ENCODE measurements at regions of chr5 and their contacts with region 1.

Region 1: GRCh38 chr5:173581408-173582215 is 34.8 kb downstream of the BOD1 start:
- DNase-seq: peak; percentile 33
- H3K4me3 ChIP-seq: no peak overlapping the region
- H3K27ac ChIP-seq: no peak overlapping the region
- H3K4me1 ChIP-seq: no peaks in the 10 kb centered on the region
- H3K27me3 ChIP-seq: peaks cover 2 to 6% of the 10 kb centered on the region in 2 experiments
- CTCF ChIP-seq: peak; percentile 75 to 87
- POLR2A ChIP-seq: no peak

Region 2: DNA sequence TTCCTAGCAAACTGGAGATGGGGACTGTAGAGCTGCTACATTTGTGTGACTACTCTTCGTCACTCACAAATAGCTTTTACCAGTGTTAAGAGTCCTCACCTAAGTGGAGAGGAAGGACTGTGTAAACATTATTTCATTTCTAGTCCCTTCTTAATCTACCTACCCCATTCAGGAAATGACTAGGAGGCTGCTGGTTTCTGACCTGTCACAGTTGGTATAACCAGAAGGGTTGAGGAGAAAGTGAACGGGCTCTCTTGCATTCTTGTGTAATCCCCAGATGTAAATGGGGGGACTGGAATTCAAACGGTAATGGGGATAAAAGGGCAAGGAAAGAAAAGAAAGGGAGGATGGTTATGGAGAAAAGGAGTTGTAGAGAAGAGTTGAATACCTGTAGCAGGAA is 472.7 kb before region 1 on chr5:
- CTCF ChIA-PET with region 1: no interaction called
- POLR2A ChIA-PET with region 1: no interaction called
- dilution Hi-C with region 1: no loop called
- intact Hi-C with region 1: no loop called
- DNase-seq: no peak
- H3K4me3 ChIP-seq: no peak overlapping the region
- H3K27ac ChIP-seq: no peak overlapping the region
- H3K4me1 ChIP-seq: no peaks in the 10 kb centered on the region
- H3K27me3 ChIP-seq: no peaks in the 10 kb centered on the region
- CTCF ChIP-seq: no peak
- POLR2A ChIP-seq: no peak

Region 3: DNA sequence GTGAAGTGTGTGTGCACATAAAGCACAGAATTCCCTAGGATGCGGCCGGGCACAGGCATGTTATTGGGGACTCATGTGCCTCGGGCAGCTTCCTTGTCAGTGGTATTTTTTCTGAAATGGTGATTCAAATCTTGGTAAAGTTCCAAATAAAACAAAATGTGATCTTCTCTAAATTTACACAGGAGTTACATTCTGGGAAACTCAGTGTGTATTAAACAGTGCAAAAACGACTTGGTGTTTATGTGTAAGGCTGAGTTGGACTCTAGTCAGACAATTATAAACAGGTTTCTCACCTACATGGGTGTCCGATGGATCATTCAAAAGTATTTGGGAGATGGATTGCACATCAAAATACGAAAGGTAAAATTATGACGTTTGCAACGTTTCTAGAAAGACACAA is 14.0 kb before region 1 on chr5:
- CTCF ChIA-PET with region 1: interaction called, 20 read pairs
- POLR2A ChIA-PET with region 1: no interaction called
- dilution Hi-C with region 1: no loop called
- intact Hi-C with region 1: no loop called
- DNase-seq: no peak
- H3K4me3 ChIP-seq: no peak overlapping the region
- H3K27ac ChIP-seq: no peak overlapping the region
- H3K4me1 ChIP-seq: no peaks in the 10 kb centered on the region
- H3K27me3 ChIP-seq: peaks cover 0 to 4% of the 10 kb centered on the region in 2 experiments
- CTCF ChIP-seq: no peak
- POLR2A ChIP-seq: no peak

Region 4: GRCh38 chr5:173602423-173602822 is 20.8 kb after region 1 on chr5:
- CTCF ChIA-PET with region 1: interaction called, 10 read pairs
- POLR2A ChIA-PET with region 1: no interaction called
- dilution Hi-C with region 1: no loop called
- intact Hi-C with region 1: no loop called
- DNase-seq: no peak
- H3K4me3 ChIP-seq: no peak overlapping the region
- H3K27ac ChIP-seq: no peak overlapping the region
- H3K4me1 ChIP-seq: no peaks in the 10 kb centered on the region
- H3K27me3 ChIP-seq: no peaks in the 10 kb centered on the region
- CTCF ChIP-seq: no peak
- POLR2A ChIP-seq: no peak

Region 5: GRCh38 chr5:173771121-173771724 is 189.6 kb after region 1 on chr5:
- CTCF ChIA-PET with region 1: no interaction called
- POLR2A ChIA-PET with region 1: no interaction called
- dilution Hi-C with region 1: no loop called
- intact Hi-C with region 1: no loop called
- DNase-seq: peak; percentile 14
- H3K4me3 ChIP-seq: no peak overlapping the region
- H3K27ac ChIP-seq: no peak overlapping the region
- H3K4me1 ChIP-seq: peaks cover 6% of the 10 kb centered on the region
- H3K27me3 ChIP-seq: no peaks in the 10 kb centered on the region
- CTCF ChIP-seq: no peak
- POLR2A ChIP-seq: no peak

Region 6: GRCh38 chr5:173781814-173782670 is 200.4 kb after region 1 on chr5:
- CTCF ChIA-PET with region 1: no interaction called
- POLR2A ChIA-PET with region 1: no interaction called
- dilution Hi-C with region 1: no loop called
- intact Hi-C with region 1: no loop called
- DNase-seq: peak; percentile 94
- H3K4me3 ChIP-seq: no peak overlapping the region
- H3K27ac ChIP-seq: peak overlapping the region; percentile 99
- H3K4me1 ChIP-seq: peaks cover 34% of the 10 kb centered on the region
- H3K27me3 ChIP-seq: no peaks in the 10 kb centered on the region
- CTCF ChIP-seq: no peak
- POLR2A ChIP-seq: peak; percentile 42

Region 7: DNA sequence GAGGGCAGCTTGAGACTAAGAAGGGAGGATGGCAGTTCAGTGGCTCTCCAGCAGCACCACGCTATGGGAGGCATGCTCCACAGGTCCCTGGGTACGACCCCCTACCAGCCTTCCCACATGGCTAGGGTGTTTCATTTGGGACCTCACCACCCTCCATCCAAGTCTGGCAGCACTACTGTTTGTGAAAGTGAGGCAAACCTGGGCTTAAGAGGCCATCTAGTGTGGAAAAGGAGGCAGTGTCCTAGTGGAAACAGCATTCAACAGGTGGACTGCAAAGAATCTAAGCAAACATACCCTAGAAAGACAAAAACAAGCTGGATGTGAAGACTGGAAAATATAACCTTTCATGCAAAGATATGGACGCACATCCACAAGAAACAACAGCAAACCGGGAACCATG is 402.6 kb after region 1 on chr5:
- CTCF ChIA-PET with region 1: interaction called, 10 read pairs
- POLR2A ChIA-PET with region 1: no interaction called
- dilution Hi-C with region 1: no loop called
- intact Hi-C with region 1: no loop called
- DNase-seq: peak; percentile 11
- H3K4me3 ChIP-seq: no peak overlapping the region
- H3K27ac ChIP-seq: no peak overlapping the region
- H3K4me1 ChIP-seq: no peaks in the 10 kb centered on the region
- H3K27me3 ChIP-seq: peaks cover 0 to 4% of the 10 kb centered on the region in 2 experiments
- CTCF ChIP-seq: peak in 1 of 2 donors; percentile 26
- POLR2A ChIP-seq: no peak

Measured in endothelial cell of umbilical vein (primary cell).